Activated B cell treated with CpG ODN at 0.5 μM for 24 hours (primary cell): ENCODE measurements at regions of chr1 and their contacts with region 1.

Region 1: DNA sequence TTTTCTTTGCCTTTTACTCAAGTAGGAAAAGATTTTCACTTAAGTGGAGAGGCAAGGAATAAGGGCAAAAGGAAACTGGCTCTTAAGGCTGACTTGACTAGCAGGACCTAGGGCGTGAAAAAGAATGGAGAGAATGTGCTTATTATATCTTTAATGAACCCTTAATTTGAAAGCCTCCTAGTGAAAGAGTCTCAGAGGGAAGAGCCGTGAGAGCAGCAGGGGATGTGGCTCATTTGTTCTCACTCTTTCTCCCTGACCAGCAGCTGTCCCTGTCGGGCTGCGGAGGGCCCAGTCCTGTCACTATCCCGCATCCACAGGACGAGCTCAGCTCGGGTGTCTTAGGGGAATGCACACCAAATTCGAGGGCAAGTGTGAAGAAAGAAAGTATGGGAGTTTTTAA is 180.1 kb downstream of the EDEM3 start:
- DNase-seq: no peak
- ATAC-seq: no peak
- H3K4me3 Mint-ChIP-seq: no peak overlapping the region
- H3K27ac Mint-ChIP-seq: no peak overlapping the region
- H3K4me1 Mint-ChIP-seq: no peaks in the 10 kb centered on the region
- H3K27me3 Mint-ChIP-seq: no peaks in the 10 kb centered on the region
- CTCF ChIP-seq: no peak

Region 2: DNA sequence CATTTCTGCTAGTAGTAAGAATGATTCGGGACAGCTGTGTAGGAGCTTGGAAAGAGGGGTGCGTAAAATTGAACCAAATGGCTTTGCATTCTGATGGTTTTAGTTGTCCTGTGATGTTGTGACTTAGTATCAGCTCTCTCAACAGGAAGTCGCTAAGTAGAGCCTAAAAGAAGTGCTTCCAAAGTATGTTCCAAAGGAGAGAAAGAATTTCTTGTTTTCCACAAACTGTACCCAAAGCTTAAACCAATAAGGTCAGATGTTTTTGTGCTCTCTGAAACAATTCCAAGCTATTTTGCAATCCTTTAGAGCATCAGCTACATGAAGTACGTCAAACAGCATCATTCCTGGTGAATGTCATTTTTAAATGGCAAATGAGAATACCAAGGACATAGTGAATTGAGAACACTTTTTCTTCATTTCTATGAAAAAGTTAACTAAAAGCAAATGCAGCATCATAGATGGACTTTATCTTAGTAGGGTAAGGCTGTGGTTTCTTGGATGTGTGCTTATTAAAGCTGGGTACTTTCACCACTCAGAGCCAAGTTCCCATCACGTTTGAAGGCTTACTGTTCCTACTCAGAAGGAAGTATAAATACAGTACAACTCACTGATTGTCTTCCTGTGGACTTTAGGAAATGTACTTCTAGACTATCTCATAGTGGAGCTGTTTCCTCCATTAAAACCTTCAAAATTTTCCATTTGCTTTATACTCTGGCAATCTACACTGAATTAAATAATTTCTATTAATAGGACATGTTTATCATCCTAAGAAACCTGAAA is 39.2 kb before region 1 on chr1:
- CTCF ChIA-PET with region 1: no interaction called
- POLR2A ChIA-PET with region 1: interaction called, 11 read pairs
- intact Hi-C with region 1: no loop called
- DNase-seq: no peak
- ATAC-seq: no peak
- H3K4me3 Mint-ChIP-seq: no peak overlapping the region
- H3K27ac Mint-ChIP-seq: no peak overlapping the region
- H3K4me1 Mint-ChIP-seq: peaks cover 11% of the 10 kb centered on the region
- H3K27me3 Mint-ChIP-seq: no peaks in the 10 kb centered on the region
- CTCF ChIP-seq: no peak

Region 3: GRCh38 chr1:184555665-184556641 is 18.6 kb before region 1 on chr1:
- CTCF ChIA-PET with region 1: no interaction called
- POLR2A ChIA-PET with region 1: no interaction called
- intact Hi-C with region 1: no loop called
- DNase-seq: no peak
- ATAC-seq: no peak
- H3K4me3 Mint-ChIP-seq: no peak overlapping the region
- H3K27ac Mint-ChIP-seq: no peak overlapping the region
- H3K4me1 Mint-ChIP-seq: no peaks in the 10 kb centered on the region
- H3K27me3 Mint-ChIP-seq: no peaks in the 10 kb centered on the region
- CTCF ChIP-seq: no peak

Region 4: GRCh38 chr1:184621260-184621659 is 46.7 kb after region 1 on chr1:
- CTCF ChIA-PET with region 1: no interaction called
- POLR2A ChIA-PET with region 1: no interaction called
- intact Hi-C with region 1: no loop called
- DNase-seq: no peak
- ATAC-seq: no peak
- H3K4me3 Mint-ChIP-seq: no peak overlapping the region
- H3K27ac Mint-ChIP-seq: no peak overlapping the region
- H3K4me1 Mint-ChIP-seq: no peaks in the 10 kb centered on the region
- H3K27me3 Mint-ChIP-seq: no peaks in the 10 kb centered on the region
- CTCF ChIP-seq: no peak